ENCODE measurements at regions of chr14 and their contacts with region 1.

Region 1: DNA sequence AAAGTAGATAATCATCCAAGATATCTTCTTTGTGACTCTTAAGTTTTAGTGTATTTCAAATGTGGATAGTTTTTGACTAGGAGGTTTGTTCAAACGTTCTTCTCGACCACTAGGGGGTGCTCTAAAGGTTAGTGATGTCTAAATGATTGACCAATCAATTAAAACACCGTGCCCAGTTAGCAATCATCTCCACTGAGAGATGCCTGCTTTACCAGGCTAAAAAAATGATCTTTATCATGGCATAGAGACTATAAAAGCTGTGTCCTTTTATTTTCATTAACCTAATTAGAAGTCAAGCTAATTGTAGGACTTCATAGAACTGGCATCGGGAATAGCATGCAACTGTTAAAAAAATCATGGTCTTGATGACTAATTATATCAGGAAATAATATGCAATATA is 153.9 kb downstream of the PRKCH start:
- DNase-seq: peak; percentile 56
- H3K4me3 ChIP-seq: no peak overlapping the region
- CTCF ChIP-seq: peak; percentile 59

Region 2: DNA sequence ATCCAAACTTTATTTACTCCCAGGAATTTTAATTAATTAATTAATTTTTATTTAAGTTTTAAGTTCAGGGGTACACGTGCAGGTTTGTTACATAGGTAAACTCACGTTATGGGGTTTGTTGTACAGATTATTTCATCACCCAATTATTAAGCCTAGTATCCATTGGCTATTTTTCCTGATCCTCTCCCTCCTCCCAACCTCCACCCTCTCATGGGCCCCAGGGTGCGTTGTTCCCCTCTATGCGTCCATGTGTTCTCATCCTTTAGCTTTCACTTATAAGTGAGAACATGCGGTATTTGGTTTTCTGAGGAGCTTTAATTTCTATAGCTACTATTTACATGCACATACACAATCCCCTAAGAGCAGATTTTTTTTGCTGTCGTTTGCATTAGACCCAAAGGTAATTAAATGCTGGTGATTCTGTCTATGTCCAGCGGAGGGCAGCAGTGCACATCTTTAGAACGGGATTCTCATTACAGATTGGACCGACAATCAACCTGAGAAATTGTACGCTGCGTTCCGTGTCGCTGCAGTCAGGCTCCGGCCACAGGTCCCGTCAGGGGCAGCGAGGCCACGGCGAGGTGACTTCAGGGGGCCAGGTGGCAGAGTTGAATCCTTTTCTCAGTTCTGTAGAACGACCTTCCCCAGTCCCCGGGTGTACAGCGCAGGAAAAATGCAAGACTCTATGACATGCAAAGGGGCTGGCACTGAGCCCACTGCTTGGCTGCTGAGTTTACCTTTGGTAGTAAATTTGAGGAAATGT is 205.8 kb before region 1 on chr14:
- in situ Hi-C with region 1: no loop called
- DNase-seq: peak; percentile 54
- H3K4me3 ChIP-seq: peak overlapping the region; percentile 31
- CTCF ChIP-seq: peak; percentile 73

Region 3: DNA sequence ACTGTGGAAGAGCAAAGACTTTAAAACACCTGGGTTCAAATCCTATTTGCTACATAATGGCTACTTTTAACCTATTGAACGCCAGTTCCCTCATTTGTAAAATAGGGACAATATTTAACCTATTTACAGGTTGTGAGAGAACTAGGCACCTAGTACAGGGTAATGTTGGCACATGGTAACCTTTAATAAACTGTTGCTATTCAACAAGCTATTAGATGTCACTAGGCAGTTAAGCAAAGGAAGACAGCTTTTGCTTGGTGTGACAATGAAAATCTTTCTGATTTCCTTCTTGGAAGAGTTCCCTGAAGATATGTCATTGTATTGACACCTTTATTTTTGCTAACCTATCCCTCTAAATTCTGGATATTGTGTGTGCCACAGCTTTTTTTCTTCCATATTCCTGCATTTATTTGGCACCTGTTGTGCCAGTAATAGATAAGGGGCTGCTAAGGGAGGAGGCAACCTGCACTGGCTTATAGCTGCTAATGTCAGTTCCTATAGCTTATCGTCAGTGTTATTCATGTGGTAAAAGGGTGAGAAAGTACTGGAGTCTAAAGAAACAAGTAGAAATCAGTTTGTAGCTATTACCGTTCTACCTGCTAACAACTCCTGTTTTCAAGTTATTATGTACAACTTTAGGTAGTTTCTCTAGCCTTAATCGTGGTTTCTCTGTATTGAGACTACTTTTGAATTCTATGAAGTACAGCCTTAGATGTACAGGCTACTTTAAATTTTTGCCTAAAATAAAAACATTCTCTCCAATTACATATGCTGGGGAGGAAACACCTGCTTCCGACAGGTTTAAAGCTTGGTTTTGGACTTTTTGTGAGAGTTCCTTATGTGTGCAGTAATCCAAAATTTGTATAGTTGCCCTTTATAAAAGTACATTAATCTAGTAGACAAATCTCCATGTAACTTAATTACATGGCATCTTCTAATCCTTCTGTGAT is 244.3 kb after region 1 on chr14:
- in situ Hi-C with region 1: loop called (anchors 10 kb)
- DNase-seq: no peak
- H3K4me3 ChIP-seq: no peak overlapping the region
- CTCF ChIP-seq: no peak